IMR-90 (cell line): ENCODE measurements at regions of chr18 and their contacts with region 1.

Region 1: GRCh38 chr18:62372156-62372555 is 47.0 kb downstream of the TNFRSF11A start:
- DNase-seq: no peak
- ATAC-seq: no peak
- H3K4me3 ChIP-seq: no peak overlapping the region
- H3K27ac ChIP-seq: no peak overlapping the region
- H3K4me1 ChIP-seq: no peaks in the 10 kb centered on the region
- H3K27me3 ChIP-seq: peaks cover 25% of the 10 kb centered on the region
- CTCF ChIP-seq: no peak
- POLR2A ChIP-seq: no peak
- RAD21 ChIP-seq: no peak

Region 2: DNA sequence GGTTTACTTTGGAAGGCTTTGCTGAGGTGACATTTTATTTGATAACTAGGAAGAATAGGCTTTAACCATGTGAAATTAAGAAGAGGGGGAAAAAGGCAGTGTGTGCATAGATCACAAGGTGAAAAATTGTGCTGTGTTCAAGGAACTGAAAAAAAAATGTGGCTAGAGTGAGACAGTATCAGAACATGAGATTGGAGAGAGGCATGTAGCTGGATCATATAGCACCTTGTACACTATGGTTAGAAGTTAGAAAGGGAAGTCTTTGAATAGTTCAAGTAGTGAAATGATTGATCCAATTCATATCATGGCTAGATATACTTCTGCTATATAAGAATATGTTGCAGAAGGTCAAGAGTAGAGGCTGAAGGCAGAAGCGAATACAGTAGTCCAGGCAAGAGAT is 59.3 kb before region 1 on chr18:
- CTCF ChIA-PET with region 1: no interaction called
- POLR2A ChIA-PET with region 1: no interaction called
- dilution Hi-C with region 1: no loop called
- in situ Hi-C with region 1: loop called (anchors 10 kb)
- intact Hi-C with region 1: no loop called
- DNase-seq: no peak
- ATAC-seq: no peak
- H3K4me3 ChIP-seq: no peak overlapping the region
- H3K27ac ChIP-seq: no peak overlapping the region
- H3K4me1 ChIP-seq: no peaks in the 10 kb centered on the region
- H3K27me3 ChIP-seq: no peaks in the 10 kb centered on the region
- CTCF ChIP-seq: no peak
- POLR2A ChIP-seq: no peak
- RAD21 ChIP-seq: no peak